WTC11 (cell line): ENCODE measurements at regions of chr1 and their contacts with region 1.

Region 1: DNA sequence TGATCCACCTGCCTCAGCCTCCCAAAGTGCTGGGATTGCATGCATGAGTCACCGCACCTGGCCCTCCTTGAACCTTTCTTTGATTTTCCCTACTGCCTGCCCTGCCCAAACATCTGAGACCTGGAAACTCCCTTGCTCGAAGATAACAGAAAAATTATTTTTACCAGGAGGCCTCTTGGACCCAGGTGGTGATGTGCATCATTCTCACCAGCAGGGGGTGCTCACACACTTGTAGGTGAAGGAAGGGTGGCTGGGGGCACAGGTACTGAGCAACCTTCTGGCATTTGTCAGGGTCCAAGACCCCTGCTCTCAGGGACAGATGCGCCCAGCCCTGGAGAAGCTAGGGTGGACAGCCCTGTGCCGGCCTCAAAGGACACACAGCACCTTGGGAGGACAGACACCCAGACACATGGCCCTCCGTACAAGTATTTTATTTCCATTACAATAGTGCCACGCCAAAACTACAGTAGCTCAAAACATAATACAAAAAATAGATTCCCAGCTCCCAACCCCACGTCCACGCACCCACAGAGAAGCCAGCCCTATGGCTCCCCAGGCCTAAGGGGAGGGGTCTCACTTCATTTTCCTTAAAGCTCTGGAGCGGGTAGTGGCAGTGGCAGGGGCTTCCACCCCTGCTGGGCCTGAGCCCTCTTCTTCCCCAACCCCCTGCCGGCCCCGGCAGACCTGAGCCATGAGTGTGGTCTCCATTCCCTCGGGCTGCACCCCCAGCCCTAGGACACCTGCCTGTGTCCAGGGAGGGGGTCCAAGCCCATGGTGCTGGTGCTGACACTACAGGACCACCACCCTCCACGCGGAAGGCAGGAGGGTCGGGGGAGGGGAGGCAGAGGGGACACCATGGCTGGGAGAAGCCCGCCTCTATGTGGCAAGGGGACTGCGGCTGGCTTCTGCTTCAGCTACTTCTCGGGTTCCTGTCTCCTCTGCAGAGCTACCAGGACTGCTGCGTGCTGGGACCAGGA is 40.4 kb upstream of the EIF4G3 start:
- DNase-seq: peak; percentile 81
- ATAC-seq: peak; percentile 34
- H3K4me3 Mint-ChIP-seq: no peak overlapping the region
- H3K27ac Mint-ChIP-seq: no peak overlapping the region
- H3K4me1 Mint-ChIP-seq: peaks cover 7% of the 10 kb centered on the region; the same call in 1 of the 2 replicates
- H3K27me3 Mint-ChIP-seq: no peaks in the 10 kb centered on the region
- CTCF ChIP-seq: peak; percentile 76

Region 2: DNA sequence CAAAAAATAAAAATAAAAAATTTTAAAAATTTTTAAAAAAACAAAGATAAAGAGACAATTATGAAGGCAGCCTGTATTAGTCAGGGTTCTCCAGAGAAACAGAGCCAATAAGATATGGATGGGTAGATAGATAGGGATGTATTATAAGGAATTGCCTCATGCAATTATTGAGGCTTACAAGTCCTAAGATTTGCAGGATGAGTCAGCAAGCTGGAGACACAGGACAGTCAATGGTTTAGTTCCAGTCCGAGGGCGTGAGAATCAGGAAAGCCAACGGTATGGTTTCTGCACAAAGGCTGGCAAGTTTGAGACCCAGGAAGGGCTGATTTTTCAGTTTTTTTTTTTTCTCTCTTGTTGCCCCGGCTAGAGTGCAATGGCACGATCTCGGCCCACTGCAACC is 16.4 kb before region 1 on chr1:
- CTCF ChIA-PET with region 1: interaction called, 28 read pairs
- POLR2A ChIA-PET with region 1: no interaction called
- DNase-seq: no peak
- ATAC-seq: no peak
- H3K4me3 Mint-ChIP-seq: no peak overlapping the region
- H3K27ac Mint-ChIP-seq: no peak overlapping the region
- H3K4me1 Mint-ChIP-seq: no peaks in the 10 kb centered on the region
- H3K27me3 Mint-ChIP-seq: peaks cover 36% of the 10 kb centered on the region
- CTCF ChIP-seq: no peak

Region 3: GRCh38 chr1:21238141-21238800 is 21.1 kb after region 1 on chr1:
- CTCF ChIA-PET with region 1: interaction called, 19 read pairs
- POLR2A ChIA-PET with region 1: no interaction called
- DNase-seq: no peak
- ATAC-seq: no peak
- H3K4me3 Mint-ChIP-seq: no peak overlapping the region
- H3K27ac Mint-ChIP-seq: 0 out of 2 replicates have a peak overlapping the region, but pooled peaks have one; percentile 36
- H3K4me1 Mint-ChIP-seq: peaks cover 14% of the 10 kb centered on the region
- H3K27me3 Mint-ChIP-seq: no peaks in the 10 kb centered on the region
- CTCF ChIP-seq: no peak

Region 4: GRCh38 chr1:21255278-21255942 is 38.3 kb after region 1 on chr1:
- CTCF ChIA-PET with region 1: interaction called, 26 read pairs
- POLR2A ChIA-PET with region 1: no interaction called
- DNase-seq: peak; percentile 95
- ATAC-seq: peak; percentile 98
- H3K4me3 Mint-ChIP-seq: no peak overlapping the region
- H3K27ac Mint-ChIP-seq: no peak overlapping the region
- H3K4me1 Mint-ChIP-seq: no peaks in the 10 kb centered on the region
- H3K27me3 Mint-ChIP-seq: no peaks in the 10 kb centered on the region
- CTCF ChIP-seq: peak; percentile 79

Region 5: GRCh38 chr1:21344750-21345443 is 127.8 kb after region 1 on chr1:
- CTCF ChIA-PET with region 1: interaction called, 15 read pairs
- POLR2A ChIA-PET with region 1: no interaction called
- DNase-seq: peak; percentile 40
- ATAC-seq: peak; percentile 17
- H3K4me3 Mint-ChIP-seq: peak overlapping the region; percentile 79
- H3K27ac Mint-ChIP-seq: no peak overlapping the region
- H3K4me1 Mint-ChIP-seq: peaks cover 19% of the 10 kb centered on the region
- H3K27me3 Mint-ChIP-seq: peaks cover 22% of the 10 kb centered on the region
- CTCF ChIP-seq: no peak